GM13977 (cell line): ENCODE measurements at regions of chr3 and their contacts with region 1.

Region 1: DNA sequence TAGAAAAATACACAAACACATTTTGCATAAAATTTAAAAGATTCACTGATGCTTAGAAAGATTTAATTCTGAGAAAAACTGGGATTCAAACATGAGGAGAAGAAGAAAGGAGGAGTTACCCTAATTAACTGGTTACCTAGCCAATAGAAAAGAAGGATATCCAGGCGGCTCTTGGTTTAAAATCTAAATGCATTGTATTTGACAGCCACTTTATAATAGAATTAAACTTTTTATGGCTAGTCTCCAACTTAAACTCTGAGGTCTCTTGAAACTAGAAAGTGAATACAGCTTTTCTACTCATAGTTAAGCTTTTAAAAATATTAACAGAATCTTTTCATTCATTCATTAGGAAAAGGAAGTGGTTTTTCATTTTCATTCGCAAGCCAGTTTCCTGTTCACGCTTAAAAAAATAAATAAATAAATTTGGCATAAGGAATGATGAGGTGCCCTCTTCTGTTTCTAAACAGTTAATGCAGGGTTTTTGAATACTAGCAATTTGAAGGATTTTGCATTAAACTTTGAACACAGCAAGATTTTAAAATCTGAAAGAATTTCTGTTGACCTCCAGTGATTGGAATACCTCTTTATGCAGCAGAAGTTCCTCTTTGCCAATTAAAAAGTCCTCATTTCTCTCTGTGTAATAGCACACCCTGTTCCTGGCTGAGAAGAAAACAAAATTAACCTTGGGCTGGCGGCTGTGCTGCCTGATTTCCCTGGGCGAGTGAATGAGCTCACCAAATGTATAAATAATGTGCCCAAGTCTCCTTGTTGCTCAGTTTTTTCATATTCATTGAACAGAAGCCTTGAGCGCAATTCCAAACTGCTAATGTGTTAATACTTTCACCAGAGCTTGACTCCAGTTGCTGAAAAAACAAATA is 105.1 kb downstream of the ZMAT3 start:
- DNase-seq: no peak
- CTCF ChIP-seq: peak; percentile 55

Region 2: DNA sequence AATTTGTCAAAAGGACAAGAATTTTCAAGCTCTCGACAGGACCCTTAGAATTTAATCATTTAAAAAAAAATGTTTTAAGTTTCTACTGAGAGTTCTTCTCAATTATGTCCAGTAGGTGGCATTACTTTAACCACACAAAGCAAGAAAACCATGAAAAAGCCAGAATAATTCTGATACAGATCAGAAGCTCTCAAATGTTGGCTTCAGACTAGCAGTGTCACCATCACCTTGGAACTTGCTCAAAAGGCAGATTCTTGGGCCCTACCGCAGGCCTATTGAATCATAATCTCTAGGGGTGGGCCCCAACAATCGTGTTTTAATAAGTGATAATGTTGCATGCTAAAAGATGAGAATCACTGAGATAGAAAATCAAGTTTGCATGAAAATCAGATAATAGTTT is 529.8 kb before region 1 on chr3:
- in situ Hi-C with region 1: loop called (anchors 10 kb)
- DNase-seq: peak; percentile 54
- CTCF ChIP-seq: peak; percentile 46

Region 3: GRCh38 chr3:178536211-178537079 is 430.1 kb before region 1 on chr3 and contains the start of gene KCNMB2:
- in situ Hi-C with region 1: loop called (anchors 25 kb)
- DNase-seq: no peak
- CTCF ChIP-seq: no peak